Breast epithelium (tissue), 4 donors: ENCODE measurements at regions of chr1 and their contacts with region 1.

Region 1: GRCh38 chr1:209784265-209785169 is at the start of gene C1orf74:
- DNase-seq: peak; percentile 97 to 99
- H3K4me3 ChIP-seq: peak within 1 kb of the TSS; percentile 60 to 85 (median 71)
- H3K27ac ChIP-seq: peak within 1 kb of the TSS; percentile 83 to 92
- H3K4me1 ChIP-seq: peaks cover 0 to 17% of the 10 kb centered on the region in 2 donors
- H3K27me3 ChIP-seq: no peaks in the 10 kb centered on the region
- CTCF ChIP-seq: peak in 2 of 3 donors; percentile 7 to 18
- POLR2A ChIP-seq: peak; percentile 65
- total RNA-seq, gene C1orf74: 0.64 to 3.1 (median 2.0) TPM

Region 2: GRCh38 chr1:211260141-211261107 is 1475.9 kb after region 1 on chr1:
- intact Hi-C with region 1: loop called (anchors 10 kb)
- DNase-seq: peak; percentile 85 to 87
- H3K4me3 ChIP-seq: peak overlapping the region; percentile 86 to 97 (median 95)
- H3K27ac ChIP-seq: peak overlapping the region; percentile 87 to 97
- H3K4me1 ChIP-seq: peaks cover 0 to 5% of the 10 kb centered on the region in 2 donors
- H3K27me3 ChIP-seq: no peaks in the 10 kb centered on the region
- CTCF ChIP-seq: no peak
- POLR2A ChIP-seq: no peak